Esophagus muscularis mucosa (tissue), 4 donors: ENCODE measurements at regions of chr13 and their contacts with region 1.

Region 1: GRCh38 chr13:23375001-23375971 is 58.2 kb downstream of the SACS start:
- DNase-seq: peak; percentile 99
- H3K4me3 ChIP-seq: peak overlapping the region; percentile 92 to 99 (median 93)
- H3K27ac ChIP-seq: peak overlapping the region; percentile 94 to 96 (median 96)
- H3K4me1 ChIP-seq: peaks cover 41 to 74% (median 71%) of the 10 kb centered on the region in 4 donors
- H3K27me3 ChIP-seq: no peaks in the 10 kb centered on the region
- CTCF ChIP-seq: peak; percentile 8 to 20 (median 15)
- EP300 ChIP-seq: no peak
- POLR2A ChIP-seq: no peak

Region 2: GRCh38 chr13:23427342-23427843 is 52.1 kb after region 1 on chr13:
- intact Hi-C with region 1: loop called (anchors 5 kb)
- DNase-seq: peak; percentile 94
- H3K4me3 ChIP-seq: peak overlapping the region; percentile 6 to 46 (median 30)
- H3K27ac ChIP-seq: peak overlapping the region; percentile 82 to 86 (median 84)
- H3K4me1 ChIP-seq: peaks cover 12 to 56% (median 41%) of the 10 kb centered on the region in 4 donors
- H3K27me3 ChIP-seq: no peaks in the 10 kb centered on the region
- CTCF ChIP-seq: peak in 1 of 3 experiments; percentile 16
- EP300 ChIP-seq: peak; percentile 87
- POLR2A ChIP-seq: no peak

Region 3: GRCh38 chr13:23654111-23655110 is 279.1 kb after region 1 on chr13:
- intact Hi-C with region 1: no loop called
- DNase-seq: peak; percentile 72
- H3K4me3 ChIP-seq: no peak overlapping the region
- H3K27ac ChIP-seq: no peak overlapping the region
- H3K4me1 ChIP-seq: peaks cover 12 to 33% (median 19%) of the 10 kb centered on the region in 4 donors
- H3K27me3 ChIP-seq: no peaks in the 10 kb centered on the region
- CTCF ChIP-seq: no peak
- EP300 ChIP-seq: no peak
- POLR2A ChIP-seq: no peak